Caco-2 (cell line): ENCODE measurements at regions of chr15 and their contacts with region 1.

Region 1: DNA sequence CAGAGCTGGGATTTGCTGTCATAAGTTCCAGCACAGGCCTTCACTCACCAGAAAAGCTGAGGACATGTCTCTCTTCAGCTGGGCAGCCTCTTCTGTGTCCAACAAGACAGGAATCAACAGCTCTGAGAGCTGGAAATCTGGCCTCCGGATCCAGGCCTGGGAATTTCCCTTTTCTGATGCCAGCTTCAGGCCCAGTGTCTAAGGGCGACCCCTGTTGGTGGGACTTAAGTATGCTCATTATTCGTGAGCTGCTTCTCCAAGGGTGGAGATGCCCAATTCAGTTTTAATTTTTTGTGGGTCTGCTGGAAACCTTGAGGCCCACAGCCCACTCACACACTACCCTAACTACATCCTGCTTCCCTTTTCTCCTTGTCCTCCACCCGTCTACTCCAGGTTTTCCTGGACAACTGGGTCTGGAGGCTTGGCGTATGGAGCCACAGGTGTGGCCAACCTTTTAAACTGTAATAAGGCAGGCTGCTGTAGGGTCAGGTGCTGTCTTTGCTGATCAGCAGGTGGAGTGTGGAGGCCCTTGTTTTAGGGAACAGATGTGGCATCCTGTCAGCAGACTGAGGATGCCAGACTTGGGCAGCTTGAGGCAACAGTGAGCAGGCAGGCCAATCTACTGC is 2.6 kb upstream of the CEMIP start:
- DNase-seq: peak; percentile 65 to 79
- H3K4me3 ChIP-seq: no peak overlapping the region
- H3K4me3 Mint-ChIP-seq: no peak overlapping the region
- H3K27ac Mint-ChIP-seq: no peak overlapping the region
- H3K4me1 ChIP-seq: no peaks in the 10 kb centered on the region
- H3K4me1 Mint-ChIP-seq: peaks cover 5% of the 10 kb centered on the region
- H3K27me3 ChIP-seq: no peaks in the 10 kb centered on the region; the same call in 1 of the 2 replicates
- H3K27me3 Mint-ChIP-seq: peaks cover 8% of the 10 kb centered on the region
- CTCF ChIP-seq: peak; percentile 77 to 84

Region 2: GRCh38 chr15:80152180-80152845 is 624.2 kb before region 1 on chr15:
- CTCF ChIA-PET with region 1: no interaction called
- POLR2A ChIA-PET with region 1: interaction called, 16 read pairs
- intact Hi-C with region 1: no loop called
- DNase-seq: peak; percentile 90 to 98
- H3K4me3 ChIP-seq: peak overlapping the region; percentile 87
- H3K4me3 Mint-ChIP-seq: peak overlapping the region; percentile 84
- H3K27ac Mint-ChIP-seq: no peak overlapping the region
- H3K4me1 ChIP-seq: peaks cover 9% of the 10 kb centered on the region; the same call in 1 of the 2 replicates
- H3K4me1 Mint-ChIP-seq: peaks cover 7% of the 10 kb centered on the region
- H3K27me3 ChIP-seq: no peaks in the 10 kb centered on the region
- H3K27me3 Mint-ChIP-seq: peaks cover 3% of the 10 kb centered on the region
- CTCF ChIP-seq: no peak

Region 3: DNA sequence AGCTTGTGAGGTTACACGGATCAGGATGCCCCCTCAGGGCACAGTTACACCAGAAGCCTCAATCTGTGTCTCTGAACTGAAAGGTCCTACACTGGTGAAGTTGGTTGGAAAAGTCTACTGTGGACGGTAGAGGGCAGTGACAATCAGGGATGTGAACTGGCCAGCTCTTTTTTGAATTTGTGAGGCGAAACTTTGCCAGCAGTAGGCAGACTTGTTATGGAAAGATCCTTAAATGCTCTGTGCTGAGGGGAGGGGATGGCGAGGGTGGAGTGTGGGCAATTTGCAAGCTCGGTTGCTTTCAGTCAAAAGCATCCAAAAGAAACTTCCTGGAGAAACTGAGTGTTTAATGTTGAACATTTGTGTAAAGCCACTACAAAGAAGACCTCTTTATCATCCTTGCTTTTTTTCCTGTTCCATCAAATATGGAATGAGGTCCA is 208.8 kb before region 1 on chr15:
- CTCF ChIA-PET with region 1: interaction called, 66 read pairs
- POLR2A ChIA-PET with region 1: no interaction called
- intact Hi-C with region 1: loop called (anchors 1 kb)
- DNase-seq: peak; percentile 50 to 65
- H3K4me3 ChIP-seq: no peak overlapping the region
- H3K4me3 Mint-ChIP-seq: no peak overlapping the region
- H3K27ac Mint-ChIP-seq: no peak overlapping the region
- H3K4me1 ChIP-seq: no peaks in the 10 kb centered on the region
- H3K4me1 Mint-ChIP-seq: no peaks in the 10 kb centered on the region
- H3K27me3 ChIP-seq: no peaks in the 10 kb centered on the region
- H3K27me3 Mint-ChIP-seq: peaks cover 17% of the 10 kb centered on the region
- CTCF ChIP-seq: peak; percentile 67 to 84

Region 4: GRCh38 chr15:80660122-80660521 is 116.4 kb before region 1 on chr15:
- CTCF ChIA-PET with region 1: interaction called, 84 read pairs
- POLR2A ChIA-PET with region 1: no interaction called
- intact Hi-C with region 1: loop called (anchors 1 kb)
- DNase-seq: peak; percentile 61 to 63
- H3K4me3 ChIP-seq: no peak overlapping the region
- H3K4me3 Mint-ChIP-seq: no peak overlapping the region
- H3K27ac Mint-ChIP-seq: no peak overlapping the region
- H3K4me1 ChIP-seq: peaks cover 10% of the 10 kb centered on the region
- H3K4me1 Mint-ChIP-seq: peaks cover 6% of the 10 kb centered on the region
- H3K27me3 ChIP-seq: no peaks in the 10 kb centered on the region
- H3K27me3 Mint-ChIP-seq: no peaks in the 10 kb centered on the region
- CTCF ChIP-seq: peak; percentile 59 to 68

Region 5: DNA sequence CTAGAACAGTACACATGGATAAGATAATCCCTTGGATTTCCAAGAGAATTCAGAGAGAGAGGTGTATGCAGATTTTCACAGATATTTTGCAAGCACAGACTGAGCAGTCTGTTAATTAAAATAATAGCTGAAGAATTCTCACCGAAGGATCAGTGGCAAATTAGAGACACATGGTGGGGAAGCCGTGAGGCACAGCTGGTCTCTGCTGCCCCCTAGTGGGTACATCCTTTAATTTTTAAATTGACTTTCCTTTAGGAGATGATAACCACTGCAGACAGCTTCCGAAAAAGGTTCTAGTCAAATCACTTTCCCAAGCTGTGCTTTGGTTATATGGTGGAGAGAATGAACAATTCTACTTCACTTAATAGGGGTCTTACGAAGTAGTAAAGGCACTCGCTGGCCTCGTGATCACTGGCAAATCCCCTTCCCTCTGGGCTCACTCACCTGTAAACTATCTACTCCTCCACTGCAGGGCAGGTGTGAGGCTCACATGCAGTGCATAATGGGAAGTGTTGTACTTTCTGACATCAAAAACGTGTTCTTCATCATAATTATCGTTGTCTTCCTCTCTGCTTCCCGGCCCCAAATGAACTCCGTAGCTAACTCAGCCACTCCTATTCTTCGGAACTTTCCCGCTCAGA is 193.6 kb after region 1 on chr15:
- CTCF ChIA-PET with region 1: interaction called, 9 read pairs
- POLR2A ChIA-PET with region 1: no interaction called
- intact Hi-C with region 1: loop called (anchors 1 kb)
- DNase-seq: peak in 1 of 2 experiments; percentile 77
- H3K4me3 ChIP-seq: no peak overlapping the region
- H3K4me3 Mint-ChIP-seq: no peak overlapping the region
- H3K27ac Mint-ChIP-seq: no peak overlapping the region
- H3K4me1 ChIP-seq: peaks cover 21% of the 10 kb centered on the region
- H3K4me1 Mint-ChIP-seq: peaks cover 14% of the 10 kb centered on the region
- H3K27me3 ChIP-seq: no peaks in the 10 kb centered on the region
- H3K27me3 Mint-ChIP-seq: no peaks in the 10 kb centered on the region
- CTCF ChIP-seq: peak; percentile 59 to 85